ENCODE measurements at regions of chr4 and their contacts with region 1.

Region 1: GRCh38 chr4:128809477-128810330 is at the start of gene JADE1:
- DNase-seq: peak; percentile 96
- H3K4me3 Mint-ChIP-seq: peak within 1 kb of the TSS; percentile 93
- H3K27ac Mint-ChIP-seq: peak within 1 kb of the TSS; percentile 91
- H3K4me1 Mint-ChIP-seq: peaks cover 10% of the 10 kb centered on the region
- H3K27me3 Mint-ChIP-seq: no peaks in the 10 kb centered on the region
- CTCF ChIP-seq: peak; percentile 45
- total RNA-seq, gene JADE1: 22.7 and 25.9 TPM in 2 replicates

Region 2: GRCh38 chr4:128386761-128387599 is 422.7 kb before region 1 on chr4:
- CTCF ChIA-PET with region 1: interaction called, 4 read pairs
- POLR2A ChIA-PET with region 1: interaction called, 12 read pairs
- intact Hi-C with region 1: loop called (anchors 2 kb)
- DNase-seq: peak; percentile 94
- H3K4me3 Mint-ChIP-seq: peak overlapping the region; percentile 52
- H3K27ac Mint-ChIP-seq: peak overlapping the region; percentile 84
- H3K4me1 Mint-ChIP-seq: peaks cover 45% of the 10 kb centered on the region
- H3K27me3 Mint-ChIP-seq: no peaks in the 10 kb centered on the region
- CTCF ChIP-seq: no peak

Region 3: GRCh38 chr4:128565565-128566186 is 244.0 kb before region 1 on chr4:
- CTCF ChIA-PET with region 1: interaction called, 6 read pairs
- POLR2A ChIA-PET with region 1: interaction called, 6 read pairs
- intact Hi-C with region 1: loop called (anchors 2 kb)
- DNase-seq: peak; percentile 61
- H3K4me3 Mint-ChIP-seq: no peak overlapping the region
- H3K27ac Mint-ChIP-seq: peak overlapping the region; percentile 13
- H3K4me1 Mint-ChIP-seq: peaks cover 17% of the 10 kb centered on the region
- H3K27me3 Mint-ChIP-seq: no peaks in the 10 kb centered on the region
- CTCF ChIP-seq: peak; percentile 59

Region 4: GRCh38 chr4:128600996-128601871 is 208.5 kb before region 1 on chr4:
- CTCF ChIA-PET with region 1: interaction called, 8 read pairs
- POLR2A ChIA-PET with region 1: interaction called, 13 read pairs
- intact Hi-C with region 1: no loop called
- DNase-seq: peak; percentile 99
- H3K4me3 Mint-ChIP-seq: peak overlapping the region; percentile 53
- H3K27ac Mint-ChIP-seq: peak overlapping the region; percentile 84
- H3K4me1 Mint-ChIP-seq: peaks cover 64% of the 10 kb centered on the region
- H3K27me3 Mint-ChIP-seq: no peaks in the 10 kb centered on the region
- CTCF ChIP-seq: no peak

Region 5: DNA sequence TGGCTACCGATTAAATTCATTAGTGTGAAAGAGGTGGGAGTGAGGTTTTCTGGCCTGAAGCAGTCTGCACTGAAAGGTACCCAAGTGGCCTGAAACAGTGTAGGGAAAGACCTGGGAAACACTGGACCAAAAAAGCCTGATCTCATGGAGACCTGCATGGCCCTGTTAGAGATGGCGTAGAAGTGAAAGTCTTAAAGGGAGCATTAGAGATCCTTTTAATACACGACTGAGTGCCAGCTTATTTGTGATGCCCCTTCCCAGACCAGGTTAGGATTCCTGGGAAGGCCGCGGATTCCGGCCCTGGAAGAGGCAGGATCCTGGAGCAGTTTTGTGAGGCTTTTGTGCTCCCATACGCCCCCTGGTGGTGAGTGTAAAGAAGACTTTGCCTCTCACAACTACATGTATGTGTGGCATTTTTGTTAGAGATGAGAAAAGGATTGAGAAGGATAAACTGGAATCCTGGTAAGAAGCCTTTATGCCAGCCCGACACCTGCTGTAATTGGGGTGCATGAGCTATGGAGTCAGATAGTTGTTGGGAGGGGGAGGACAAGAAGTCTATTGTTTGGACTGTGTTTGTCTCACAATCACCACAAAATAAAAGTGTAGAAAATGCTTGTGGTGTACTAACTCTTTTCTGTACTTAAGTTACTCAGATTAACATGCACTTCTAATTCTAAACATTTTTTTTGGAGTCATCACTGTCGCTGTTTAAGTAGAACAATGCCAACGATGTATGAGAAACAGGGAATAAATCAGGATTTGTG is 53.8 kb after region 1 on chr4:
- CTCF ChIA-PET with region 1: interaction called, 15 read pairs
- POLR2A ChIA-PET with region 1: interaction called, 8 read pairs
- intact Hi-C with region 1: loop called (anchors 1 kb)
- DNase-seq: peak; percentile 89
- H3K4me3 Mint-ChIP-seq: no peak overlapping the region
- H3K27ac Mint-ChIP-seq: peak overlapping the region; percentile 47
- H3K4me1 Mint-ChIP-seq: peaks cover 3% of the 10 kb centered on the region
- H3K27me3 Mint-ChIP-seq: no peaks in the 10 kb centered on the region
- CTCF ChIP-seq: peak; percentile 63

Measured in MCF 10A (cell line).